ENCODE measurements at regions of chr1 and their contacts with region 1.

Region 1: DNA sequence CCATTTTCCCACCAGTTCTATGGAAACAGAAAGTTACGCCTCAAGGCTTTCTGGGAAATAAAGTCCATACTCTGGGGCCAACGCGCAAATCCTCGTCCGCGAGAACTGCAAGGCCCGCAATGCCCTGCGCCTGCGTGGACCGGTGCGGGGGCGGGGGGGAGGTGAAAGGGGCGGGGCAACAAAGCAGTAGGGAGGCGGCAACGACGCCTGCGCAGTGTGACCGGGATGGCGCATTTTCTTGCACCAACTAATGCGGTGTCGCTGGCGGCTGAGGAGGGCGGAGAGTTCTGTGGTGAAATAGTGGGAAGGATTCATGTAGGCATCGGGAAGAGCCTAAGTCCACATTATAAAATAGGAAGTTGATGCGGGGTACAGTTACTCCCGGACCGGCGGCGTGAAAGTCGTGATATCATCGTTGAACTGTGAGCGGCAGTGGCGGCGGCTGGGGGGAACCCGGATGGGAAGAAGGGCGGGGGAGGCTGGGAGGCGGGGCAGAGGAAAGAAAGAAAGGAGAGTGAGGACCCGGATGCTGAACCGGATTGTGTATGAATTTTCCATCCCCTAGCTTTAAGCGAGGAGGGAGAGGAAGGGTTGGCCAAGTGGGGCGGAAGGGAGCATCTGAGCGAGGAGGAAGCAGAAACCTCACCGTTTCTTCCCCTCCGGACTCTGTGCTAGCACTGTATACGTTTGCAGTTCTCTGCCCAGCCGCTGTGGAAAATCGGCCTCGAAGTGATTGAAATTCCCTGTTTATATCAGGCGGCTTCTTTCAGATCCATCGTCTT is at the start of gene GGPS1:
- DNase-seq: peak; percentile 96 to 98
- H3K4me3 ChIP-seq: peak within 1 kb of the TSS; percentile 95
- H3K4me3 Mint-ChIP-seq: no peak within 1 kb of the TSS
- H3K27ac Mint-ChIP-seq: no peak within 1 kb of the TSS
- H3K4me1 ChIP-seq: peaks cover 17% of the 10 kb centered on the region
- H3K4me1 Mint-ChIP-seq: peaks cover 24% of the 10 kb centered on the region
- H3K27me3 ChIP-seq: no peaks in the 10 kb centered on the region
- H3K27me3 Mint-ChIP-seq: no peaks in the 10 kb centered on the region
- CTCF ChIP-seq: no peak
- total RNA-seq, gene GGPS1: 40.4 and 45.3 TPM in 2 replicates

Region 2: DNA sequence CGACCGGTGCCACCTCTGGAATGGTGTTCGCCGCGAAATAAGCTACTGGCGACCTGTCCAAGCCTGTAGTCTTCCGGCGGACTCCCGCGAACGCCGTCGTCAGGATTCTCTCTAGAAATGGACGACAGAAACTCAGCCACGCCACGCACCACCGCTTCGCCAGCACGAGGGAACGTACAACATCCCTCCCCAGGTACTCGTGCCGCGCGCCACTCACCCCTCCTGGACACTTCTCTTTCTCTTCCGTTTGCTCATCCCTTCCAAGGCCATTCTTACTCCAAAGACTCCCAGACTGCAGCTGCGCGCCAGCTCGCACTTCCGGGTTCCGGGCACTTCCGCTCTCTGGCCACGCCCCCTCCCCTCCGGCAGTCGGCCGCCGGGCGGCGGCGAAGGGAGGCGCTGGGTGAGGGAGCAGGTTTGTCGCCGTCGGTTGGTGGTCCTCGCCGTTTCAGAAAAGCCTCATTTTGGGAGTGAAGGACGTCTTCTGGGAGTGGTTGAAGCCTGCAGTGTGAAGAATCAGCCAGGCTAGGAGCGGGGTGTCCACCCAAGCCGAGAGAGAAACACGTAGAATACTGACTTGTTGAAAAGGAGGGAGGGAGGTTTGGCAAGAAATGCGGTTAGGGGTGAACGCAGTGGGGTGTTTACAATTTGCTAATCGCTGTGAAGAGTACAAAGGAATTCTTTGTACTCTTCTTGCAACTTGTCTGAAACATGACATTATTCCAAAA is 167.4 kb before region 1 on chr1 and contains the start of gene RBM34:
- CTCF ChIA-PET with region 1: no interaction called
- POLR2A ChIA-PET with region 1: no interaction called
- intact Hi-C with region 1: loop called (anchors 2 kb)
- DNase-seq: peak; percentile 92 to 96
- H3K4me3 ChIP-seq: peak within 1 kb of the TSS; percentile 50
- H3K4me3 Mint-ChIP-seq: peak within 1 kb of the TSS; percentile 98
- H3K27ac Mint-ChIP-seq: peak within 1 kb of the TSS; percentile 99
- H3K4me1 ChIP-seq: peaks cover 14% of the 10 kb centered on the region; the same call in 1 of the 2 replicates
- H3K4me1 Mint-ChIP-seq: peaks cover 12% of the 10 kb centered on the region
- H3K27me3 ChIP-seq: no peaks in the 10 kb centered on the region
- H3K27me3 Mint-ChIP-seq: no peaks in the 10 kb centered on the region
- CTCF ChIP-seq: peak in 1 of 2 experiments; percentile 28
- total RNA-seq, gene RBM34: 96.5 and 103 TPM in 2 replicates

Region 3: DNA sequence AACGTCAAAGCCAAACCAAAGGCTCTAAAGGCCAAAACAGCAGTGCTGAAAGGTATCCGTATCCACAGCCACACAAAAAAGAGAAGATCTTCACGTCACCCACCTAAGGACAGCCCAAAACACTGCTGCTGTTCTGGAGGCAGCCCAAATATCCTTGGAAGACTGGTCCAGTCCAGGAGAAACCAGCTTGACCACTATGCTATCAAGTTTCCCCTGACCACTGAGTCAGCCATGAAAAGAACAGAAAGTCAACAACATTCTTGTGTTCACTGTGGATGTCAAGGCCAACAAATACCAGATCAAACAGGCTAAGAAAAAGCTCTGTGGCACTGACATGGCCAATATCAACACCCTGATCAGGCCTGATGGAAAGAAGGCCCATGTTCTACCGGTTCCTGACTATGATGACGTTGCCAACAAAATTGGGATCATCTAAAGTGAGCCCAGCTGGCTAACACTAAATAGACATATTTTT is 32.6 kb before region 1 on chr1:
- CTCF ChIA-PET with region 1: no interaction called
- POLR2A ChIA-PET with region 1: interaction called, 3 read pairs
- intact Hi-C with region 1: loop called (anchors 1 kb)
- DNase-seq: peak; percentile 54 to 65
- H3K4me3 ChIP-seq: no peak overlapping the region
- H3K4me3 Mint-ChIP-seq: peak overlapping the region; percentile 16
- H3K27ac Mint-ChIP-seq: peak overlapping the region; percentile 50
- H3K4me1 ChIP-seq: peaks cover 8% of the 10 kb centered on the region
- H3K4me1 Mint-ChIP-seq: peaks cover 21% of the 10 kb centered on the region
- H3K27me3 ChIP-seq: no peaks in the 10 kb centered on the region
- H3K27me3 Mint-ChIP-seq: no peaks in the 10 kb centered on the region
- CTCF ChIP-seq: no peak

Region 4: DNA sequence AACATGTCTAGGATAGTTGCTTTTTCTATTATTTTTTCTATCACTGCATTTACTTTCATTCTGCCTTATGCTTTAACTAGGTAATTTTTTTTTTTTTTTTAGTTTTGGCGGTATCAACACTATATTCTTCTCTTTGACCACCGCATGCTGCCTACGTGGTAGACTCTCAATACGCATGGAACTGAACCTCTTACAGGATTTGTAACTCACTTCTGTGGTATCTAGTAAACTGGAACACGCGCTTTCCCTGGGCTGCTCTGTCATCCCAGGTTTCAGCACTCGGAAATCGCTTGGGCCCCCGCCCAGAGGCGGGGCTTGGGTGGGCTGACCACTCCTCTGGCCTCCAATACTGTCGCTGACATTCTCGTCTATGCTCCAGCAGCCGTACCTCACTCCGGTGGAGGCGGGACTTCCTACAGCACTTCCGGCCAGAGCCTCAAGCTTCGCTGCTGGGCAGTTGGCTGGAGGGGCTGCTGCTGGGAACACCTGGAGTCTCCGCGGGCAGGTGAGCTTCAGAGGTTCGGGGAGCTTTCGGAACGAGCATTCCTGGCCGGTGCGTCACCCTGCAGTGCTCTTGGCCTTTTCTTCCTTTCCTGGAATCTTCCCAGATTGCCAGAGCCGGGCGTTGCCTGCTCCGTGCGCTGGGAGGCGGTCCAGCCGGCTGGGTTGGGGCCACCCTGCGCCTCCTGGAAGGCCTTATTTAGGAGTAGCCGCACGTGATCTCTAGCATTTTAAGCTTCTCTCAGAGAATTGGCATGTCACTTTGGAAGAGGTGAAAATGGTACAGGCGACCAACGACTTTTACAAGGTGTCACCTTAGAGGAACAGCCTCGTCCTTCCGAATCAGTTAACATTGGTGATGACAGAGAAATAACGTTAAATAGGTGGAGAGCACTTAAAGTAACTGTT is 38.7 kb after region 1 on chr1 and contains the start of gene TBCE:
- CTCF ChIA-PET with region 1: interaction called, 3 read pairs
- POLR2A ChIA-PET with region 1: interaction called, 19 read pairs
- intact Hi-C with region 1: loop called (anchors 1 kb)
- DNase-seq: peak; percentile 99
- H3K4me3 ChIP-seq: peak within 1 kb of the TSS; percentile 62
- H3K4me3 Mint-ChIP-seq: peak within 1 kb of the TSS; percentile 99
- H3K27ac Mint-ChIP-seq: peak within 1 kb of the TSS; percentile 98
- H3K4me1 ChIP-seq: peaks cover 12% of the 10 kb centered on the region; the same call in 1 of the 2 replicates
- H3K4me1 Mint-ChIP-seq: peaks cover 22% of the 10 kb centered on the region
- H3K27me3 ChIP-seq: no peaks in the 10 kb centered on the region
- H3K27me3 Mint-ChIP-seq: no peaks in the 10 kb centered on the region
- CTCF ChIP-seq: no peak
- total RNA-seq, gene TBCE: 38.5 and 40.0 TPM in 2 replicates

Region 5: DNA sequence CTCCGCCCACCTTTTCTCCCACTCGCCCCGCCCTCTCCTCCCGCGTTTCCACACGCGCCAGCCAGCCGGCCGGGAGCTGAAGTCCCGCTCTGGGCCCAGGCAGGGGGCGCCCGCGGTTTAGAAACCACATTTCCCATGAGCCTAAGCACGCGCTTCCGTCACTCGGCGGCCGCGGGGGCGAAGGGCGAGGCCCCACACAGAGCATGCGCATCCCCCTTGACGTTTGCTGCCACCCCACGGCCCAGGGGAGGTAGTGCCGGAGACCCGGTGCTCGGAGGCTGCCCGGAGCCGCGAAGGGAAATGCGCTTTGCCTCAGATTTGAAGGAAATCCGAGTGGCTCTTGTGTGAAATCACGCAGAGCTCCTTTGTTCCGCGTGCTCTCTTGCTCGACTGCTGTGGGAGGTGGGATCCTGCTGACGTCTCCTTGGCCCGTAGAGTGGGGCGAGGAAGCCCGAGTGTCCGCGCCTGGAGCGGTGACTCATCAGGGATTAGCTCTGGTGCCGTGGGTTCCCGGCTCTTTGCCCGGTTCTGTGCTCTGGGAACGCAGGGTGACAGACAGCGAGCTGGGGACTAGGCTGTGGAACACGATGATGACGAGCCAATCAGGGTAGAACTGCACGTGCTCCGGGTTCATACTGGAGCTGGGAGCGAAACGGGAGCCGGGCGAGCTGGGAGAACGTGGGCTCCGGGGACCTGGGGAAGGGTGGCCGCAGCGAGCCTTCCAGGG is 176.1 kb after region 1 on chr1:
- CTCF ChIA-PET with region 1: no interaction called
- POLR2A ChIA-PET with region 1: no interaction called
- intact Hi-C with region 1: loop called (anchors 1 kb)
- DNase-seq: peak; percentile 98 to 99
- H3K4me3 ChIP-seq: peak overlapping the region; percentile 99
- H3K4me3 Mint-ChIP-seq: peak overlapping the region; percentile 100
- H3K27ac Mint-ChIP-seq: peak overlapping the region; percentile 100
- H3K4me1 ChIP-seq: peaks cover 17% of the 10 kb centered on the region
- H3K4me1 Mint-ChIP-seq: peaks cover 9% of the 10 kb centered on the region
- H3K27me3 ChIP-seq: no peaks in the 10 kb centered on the region
- H3K27me3 Mint-ChIP-seq: peaks cover 2% of the 10 kb centered on the region
- CTCF ChIP-seq: peak; percentile 87 to 94